ENCODE measurements at regions of chr2 and their contacts with region 1.

Region 1: DNA sequence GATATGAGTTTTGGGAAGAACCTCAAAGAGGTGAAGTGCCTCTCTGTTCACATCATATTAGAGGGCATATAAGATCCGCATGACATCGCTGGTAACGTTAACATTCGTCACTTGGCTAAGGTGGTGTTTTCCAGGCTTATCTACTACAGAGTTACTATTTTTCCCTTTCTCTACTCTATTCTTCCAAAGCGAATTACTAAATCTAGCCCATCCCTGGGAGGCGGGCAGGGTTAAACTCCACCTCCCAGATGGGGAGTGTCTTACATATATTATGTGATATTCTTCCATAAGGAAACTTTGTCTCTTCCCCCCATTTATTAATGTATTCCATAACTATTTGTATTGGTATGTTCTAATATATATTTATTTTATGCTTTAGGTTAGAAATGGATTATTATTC is 293.9 kb downstream of the CYRIA start:
- DNase-seq: no peak
- ATAC-seq: no peak
- H3K4me3 ChIP-seq: no peak overlapping the region
- H3K4me3 Mint-ChIP-seq: no peak overlapping the region
- H3K27ac ChIP-seq: no peak overlapping the region
- H3K27ac Mint-ChIP-seq: no peak overlapping the region
- H3K4me1 ChIP-seq: no peaks in the 10 kb centered on the region
- H3K4me1 Mint-ChIP-seq: no peaks in the 10 kb centered on the region
- H3K27me3 ChIP-seq: no peaks in the 10 kb centered on the region
- H3K27me3 Mint-ChIP-seq: no peaks in the 10 kb centered on the region
- CTCF ChIP-seq: no peak

Region 2: DNA sequence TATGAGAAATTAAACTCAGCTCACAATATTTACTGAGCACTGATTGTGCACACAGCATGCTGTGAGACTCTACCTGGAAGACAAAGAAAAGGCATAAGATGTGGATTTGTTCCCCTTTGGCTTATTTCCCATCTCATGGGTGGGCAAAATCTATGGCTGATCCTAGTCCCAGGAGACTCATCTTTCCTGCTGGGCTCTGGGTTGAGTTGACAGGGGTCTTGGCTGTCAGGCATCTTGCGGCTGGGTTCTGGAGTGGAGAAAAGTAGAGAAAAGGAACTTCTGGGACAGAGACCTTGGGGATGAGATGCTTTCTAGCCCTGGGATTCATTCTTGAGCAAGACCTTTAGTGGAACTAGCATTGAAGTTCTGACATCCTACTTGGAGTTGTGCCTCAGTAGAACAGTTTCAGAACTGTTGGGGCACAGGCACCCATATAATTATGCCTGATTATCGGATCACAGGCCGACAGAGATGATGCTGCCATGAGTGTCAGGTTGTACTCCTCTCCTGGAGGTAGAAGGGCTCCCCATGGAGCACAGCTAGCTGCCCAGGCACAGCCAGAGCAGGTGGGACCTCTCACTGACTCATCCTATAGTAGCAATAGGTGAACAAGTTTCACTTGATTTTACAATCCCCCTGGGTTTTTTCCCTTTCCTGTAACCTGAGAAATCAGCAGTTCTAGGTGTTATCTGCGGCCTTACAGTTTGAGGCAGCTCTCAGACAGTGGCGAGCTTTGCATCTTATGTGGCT is 33.0 kb after region 1 on chr2:
- CTCF ChIA-PET with region 1: no interaction called
- POLR2A ChIA-PET with region 1: no interaction called
- intact Hi-C with region 1: loop called in 1 of 2 experiments (anchors 1 kb)
- DNase-seq: no peak
- ATAC-seq: no peak
- H3K4me3 ChIP-seq: no peak overlapping the region
- H3K4me3 Mint-ChIP-seq: no peak overlapping the region
- H3K27ac ChIP-seq: no peak overlapping the region
- H3K27ac Mint-ChIP-seq: no peak overlapping the region
- H3K4me1 ChIP-seq: no peaks in the 10 kb centered on the region
- H3K4me1 Mint-ChIP-seq: no peaks in the 10 kb centered on the region
- H3K27me3 ChIP-seq: no peaks in the 10 kb centered on the region
- H3K27me3 Mint-ChIP-seq: no peaks in the 10 kb centered on the region
- CTCF ChIP-seq: no peak